CD4-positive, alpha-beta memory T cell (primary cell): ENCODE measurements at regions of chr12 and their contacts with region 1.

Region 1: DNA sequence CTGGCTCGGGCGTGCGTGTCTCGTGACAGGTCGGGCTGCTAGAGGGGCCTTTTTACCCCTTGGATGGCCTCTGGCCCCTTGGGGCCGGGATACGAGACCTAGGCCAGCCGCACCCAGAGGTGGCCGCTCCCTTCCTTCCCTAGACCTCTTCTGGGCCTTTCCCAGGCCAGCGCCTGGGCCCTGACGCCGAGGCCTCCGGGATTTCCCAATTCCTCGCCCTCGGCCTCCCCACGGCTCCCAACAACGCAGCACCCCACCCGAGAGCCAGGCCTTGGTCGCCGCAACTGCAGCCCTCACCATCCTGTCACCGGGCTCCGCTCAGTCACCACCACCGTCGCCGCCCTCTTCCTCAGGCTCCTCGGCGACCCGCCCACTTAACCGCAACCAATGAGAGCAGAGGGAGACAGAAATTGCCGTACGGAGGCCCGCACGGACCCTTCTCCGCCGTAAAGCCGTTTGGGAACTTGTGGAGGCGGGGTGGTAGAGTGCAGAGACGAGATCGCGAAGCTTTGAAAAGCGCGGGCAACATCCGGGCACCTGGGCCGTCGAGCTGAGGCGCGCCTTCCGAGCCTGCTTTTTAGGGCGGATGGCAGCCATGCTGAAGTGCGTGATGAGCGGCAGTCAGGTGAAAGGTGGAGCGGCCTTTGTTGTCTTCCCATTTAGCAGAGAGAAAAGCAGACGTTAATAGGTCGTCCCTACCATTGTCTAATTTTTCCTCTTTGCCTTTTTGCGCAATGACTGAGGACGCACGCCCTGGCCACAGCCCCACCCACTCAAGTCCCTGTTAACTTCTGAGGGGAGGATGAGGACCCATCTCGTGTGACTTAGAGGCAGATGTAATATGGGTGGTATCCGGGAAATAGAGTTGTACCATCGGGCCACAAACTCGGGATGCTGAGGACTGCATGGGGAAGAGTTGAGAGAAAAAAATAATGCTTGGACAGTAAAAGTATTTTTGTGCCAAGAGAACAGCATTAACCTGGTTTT is at the starts of genes RAD9B and VPS29:
- DNase-seq: peak; percentile 99 to 100 (median 99)
- H3K4me3 ChIP-seq: peak within 1 kb of the TSS; percentile 85 to 91
- H3K4me3 Mint-ChIP-seq: peak within 1 kb of the TSS; percentile 96 to 99 (median 98)
- H3K27ac ChIP-seq: peak within 1 kb of the TSS; percentile 94
- H3K27ac Mint-ChIP-seq: peak within 1 kb of the TSS; percentile 95 to 99 (median 97)
- H3K4me1 ChIP-seq: peaks cover 35% of the 10 kb centered on the region
- H3K4me1 Mint-ChIP-seq: peaks cover 20 to 44% (median 30%) of the 10 kb centered on the region in 4 donors
- H3K27me3 ChIP-seq: no peaks in the 10 kb centered on the region
- H3K27me3 Mint-ChIP-seq: no peaks in the 10 kb centered on the region
- total RNA-seq, gene RAD9B: 1.1 to 2.1 TPM
- total RNA-seq, gene VPS29: 117 to 121 TPM

Region 2: DNA sequence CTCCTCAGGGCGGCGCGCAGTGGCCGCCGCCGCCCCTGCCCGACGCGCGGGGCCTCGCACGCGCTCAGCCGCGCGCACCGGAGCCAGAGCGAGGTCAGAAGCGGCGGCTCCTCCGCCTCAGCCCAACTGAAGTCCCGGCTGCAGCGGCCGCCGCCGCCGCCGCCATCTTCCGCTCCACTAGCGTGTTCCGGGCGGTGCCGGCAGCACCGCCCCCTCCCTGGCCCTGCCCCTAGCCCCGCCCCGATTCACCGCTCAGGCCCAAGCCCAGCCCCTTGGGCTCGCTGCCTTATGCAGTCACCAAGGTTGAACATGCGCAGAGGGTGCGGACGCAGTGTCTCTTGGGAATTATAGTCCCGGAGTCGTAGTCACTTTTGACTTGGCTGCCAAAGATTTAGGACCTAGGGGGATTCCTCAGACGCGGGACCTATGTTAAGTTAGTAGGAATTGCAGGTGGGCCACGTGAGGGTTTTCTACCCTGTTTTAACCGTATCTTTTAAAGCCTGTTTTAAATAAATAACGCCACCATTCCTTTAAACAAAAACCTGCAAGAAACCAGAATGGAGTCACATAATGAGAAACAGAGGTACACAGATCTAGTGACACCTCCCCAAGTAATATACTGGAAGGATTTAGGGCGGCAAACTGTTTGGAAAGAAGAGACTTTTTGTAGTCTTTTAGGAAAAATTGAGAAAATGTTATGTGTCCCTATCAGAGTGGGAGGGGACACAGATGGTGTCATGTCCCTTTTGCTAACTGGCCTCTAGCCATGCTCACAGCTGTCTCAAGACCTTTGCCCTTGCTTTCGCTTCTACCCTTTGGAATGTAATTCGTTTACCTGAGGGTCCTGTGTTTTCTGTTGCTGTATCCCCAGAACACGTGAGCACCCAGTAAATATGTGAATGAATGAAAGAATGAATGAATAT is 81.4 kb after region 1 on chr12 and contains the start of gene PPTC7:
- CTCF ChIA-PET with region 1: no interaction called
- POLR2A ChIA-PET with region 1: interaction called, 3 read pairs
- intact Hi-C with region 1: loop called (anchors 1 kb)
- DNase-seq: peak; percentile 91 to 97 (median 94)
- H3K4me3 ChIP-seq: peak within 1 kb of the TSS; percentile 77 to 84
- H3K4me3 Mint-ChIP-seq: peak within 1 kb of the TSS; percentile 89 to 98 (median 96)
- H3K27ac ChIP-seq: peak within 1 kb of the TSS; percentile 93
- H3K27ac Mint-ChIP-seq: peak within 1 kb of the TSS; percentile 94 to 97 (median 96)
- H3K4me1 ChIP-seq: peaks cover 62% of the 10 kb centered on the region
- H3K4me1 Mint-ChIP-seq: peaks cover 47 to 73% (median 61%) of the 10 kb centered on the region in 4 donors
- H3K27me3 ChIP-seq: no peaks in the 10 kb centered on the region
- H3K27me3 Mint-ChIP-seq: no peaks in the 10 kb centered on the region
- total RNA-seq, gene PPTC7: 32.6 to 35.6 TPM